Caco-2 (cell line): ENCODE measurements at regions of chr20 and their contacts with region 1.

Region 1: DNA sequence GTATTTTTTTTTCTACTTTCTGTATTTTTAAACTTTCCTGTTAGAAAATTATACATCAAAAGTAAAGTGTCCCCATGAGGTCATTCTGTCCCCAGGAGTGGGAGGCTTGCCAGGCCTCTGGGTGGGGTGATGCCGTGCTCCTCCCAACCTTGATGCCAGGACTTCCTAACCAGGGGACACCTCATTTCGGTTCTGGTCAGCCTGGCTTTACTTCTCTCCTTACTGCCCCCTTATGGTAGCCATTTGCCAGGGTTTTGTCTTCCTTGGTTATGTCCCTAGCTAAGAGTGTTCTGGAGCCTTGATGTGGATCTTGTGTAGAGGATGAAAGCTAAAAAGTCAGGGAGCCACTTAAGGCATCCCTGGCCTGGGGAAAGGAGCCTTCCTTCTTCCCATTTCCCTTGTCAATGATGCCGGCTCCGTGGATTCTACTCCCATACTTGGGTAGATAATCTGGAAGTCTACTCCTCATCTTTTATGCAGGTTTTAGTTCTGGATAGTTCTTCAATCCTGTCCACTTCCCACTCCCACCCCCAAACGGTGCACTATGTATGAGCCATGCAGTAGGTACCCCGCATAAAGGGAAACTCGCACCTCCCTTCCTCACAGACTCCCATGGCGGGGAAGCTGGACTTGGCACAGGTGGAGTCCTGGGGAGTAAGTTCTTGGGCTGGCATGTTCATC is 164.1 kb upstream of the SALL4 start:
- DNase-seq: peak; percentile 87
- H3K4me3 ChIP-seq: no peak overlapping the region
- H3K4me3 Mint-ChIP-seq: no peak overlapping the region
- H3K27ac Mint-ChIP-seq: no peak overlapping the region
- H3K4me1 ChIP-seq: peaks cover 6% of the 10 kb centered on the region; the same call in 1 of the 2 replicates
- H3K4me1 Mint-ChIP-seq: peaks cover 11% of the 10 kb centered on the region
- H3K27me3 ChIP-seq: no peaks in the 10 kb centered on the region
- H3K27me3 Mint-ChIP-seq: no peaks in the 10 kb centered on the region
- CTCF ChIP-seq: peak; percentile 86 to 88

Region 2: GRCh38 chr20:51447097-51447771 is 519.2 kb before region 1 on chr20:
- CTCF ChIA-PET with region 1: no interaction called
- POLR2A ChIA-PET with region 1: no interaction called
- intact Hi-C with region 1: no loop called
- DNase-seq: peak in 1 of 2 experiments; percentile 34
- H3K4me3 ChIP-seq: no peak overlapping the region
- H3K4me3 Mint-ChIP-seq: peak overlapping the region; percentile 20
- H3K27ac Mint-ChIP-seq: peak overlapping the region; percentile 57
- H3K4me1 ChIP-seq: peaks cover 24% of the 10 kb centered on the region
- H3K4me1 Mint-ChIP-seq: peaks cover 38% of the 10 kb centered on the region
- H3K27me3 ChIP-seq: no peaks in the 10 kb centered on the region
- H3K27me3 Mint-ChIP-seq: no peaks in the 10 kb centered on the region
- CTCF ChIP-seq: no peak

Region 3: GRCh38 chr20:51837876-51838420 is 128.5 kb before region 1 on chr20:
- CTCF ChIA-PET with region 1: interaction called, 10 read pairs
- POLR2A ChIA-PET with region 1: no interaction called
- intact Hi-C with region 1: no loop called
- DNase-seq: peak; percentile 62 to 68
- H3K4me3 ChIP-seq: no peak overlapping the region
- H3K4me3 Mint-ChIP-seq: no peak overlapping the region
- H3K27ac Mint-ChIP-seq: peak overlapping the region; percentile 75
- H3K4me1 ChIP-seq: peaks cover 13% of the 10 kb centered on the region
- H3K4me1 Mint-ChIP-seq: peaks cover 17% of the 10 kb centered on the region
- H3K27me3 ChIP-seq: no peaks in the 10 kb centered on the region
- H3K27me3 Mint-ChIP-seq: no peaks in the 10 kb centered on the region
- CTCF ChIP-seq: no peak

Region 4: GRCh38 chr20:51848346-51848745 is 118.1 kb before region 1 on chr20:
- CTCF ChIA-PET with region 1: no interaction called
- POLR2A ChIA-PET with region 1: no interaction called
- intact Hi-C with region 1: no loop called
- DNase-seq: no peak
- H3K4me3 ChIP-seq: no peak overlapping the region
- H3K4me3 Mint-ChIP-seq: no peak overlapping the region
- H3K27ac Mint-ChIP-seq: no peak overlapping the region
- H3K4me1 ChIP-seq: peaks cover 10% of the 10 kb centered on the region
- H3K4me1 Mint-ChIP-seq: peaks cover 8% of the 10 kb centered on the region
- H3K27me3 ChIP-seq: no peaks in the 10 kb centered on the region
- H3K27me3 Mint-ChIP-seq: no peaks in the 10 kb centered on the region
- CTCF ChIP-seq: no peak